ENCODE measurements at regions of chr7 and their contacts with region 1.

Region 1: GRCh38 chr7:5838761-5839500 is 41.7 kb upstream of the OCM start:
- DNase-seq: peak in 2 of 3 donors; percentile 46 to 69
- H3K4me3 ChIP-seq: no peak overlapping the region
- H3K27ac ChIP-seq: no peak overlapping the region
- H3K4me1 ChIP-seq: peaks cover 0 to 5% (median 2%) of the 10 kb centered on the region in 4 experiments
- H3K27me3 ChIP-seq: no peaks in the 10 kb centered on the region

Region 2: DNA sequence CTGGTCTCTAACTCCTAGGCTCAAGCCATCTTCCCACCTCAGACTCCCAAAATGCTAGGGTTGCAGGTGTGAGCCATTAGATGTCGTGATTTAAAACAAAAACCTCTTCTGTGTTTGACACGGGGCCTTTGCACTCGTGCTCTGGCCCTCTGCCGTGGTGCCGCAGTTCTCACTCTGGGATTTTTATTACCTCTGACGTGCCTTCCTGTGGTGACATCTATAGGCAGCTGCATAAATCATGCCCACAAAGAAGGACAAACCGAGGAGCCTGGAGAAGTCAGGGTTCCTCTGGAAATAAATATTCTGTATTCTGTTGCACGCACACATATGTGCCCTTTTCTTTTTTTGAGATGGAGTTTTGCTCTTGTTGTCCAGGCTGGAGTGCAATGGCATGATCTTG is 15.8 kb after region 1 on chr7:
- CTCF ChIA-PET with region 1: interaction called, 16 read pairs
- POLR2A ChIA-PET with region 1: no interaction called
- DNase-seq: no peak
- H3K4me3 ChIP-seq: no peak overlapping the region
- H3K27ac ChIP-seq: no peak overlapping the region
- H3K4me1 ChIP-seq: no peaks in the 10 kb centered on the region
- H3K27me3 ChIP-seq: no peaks in the 10 kb centered on the region